Colonic mucosa (tissue), 4 donors: ENCODE measurements at regions of chr2 and their contacts with region 1.

Region 1: DNA sequence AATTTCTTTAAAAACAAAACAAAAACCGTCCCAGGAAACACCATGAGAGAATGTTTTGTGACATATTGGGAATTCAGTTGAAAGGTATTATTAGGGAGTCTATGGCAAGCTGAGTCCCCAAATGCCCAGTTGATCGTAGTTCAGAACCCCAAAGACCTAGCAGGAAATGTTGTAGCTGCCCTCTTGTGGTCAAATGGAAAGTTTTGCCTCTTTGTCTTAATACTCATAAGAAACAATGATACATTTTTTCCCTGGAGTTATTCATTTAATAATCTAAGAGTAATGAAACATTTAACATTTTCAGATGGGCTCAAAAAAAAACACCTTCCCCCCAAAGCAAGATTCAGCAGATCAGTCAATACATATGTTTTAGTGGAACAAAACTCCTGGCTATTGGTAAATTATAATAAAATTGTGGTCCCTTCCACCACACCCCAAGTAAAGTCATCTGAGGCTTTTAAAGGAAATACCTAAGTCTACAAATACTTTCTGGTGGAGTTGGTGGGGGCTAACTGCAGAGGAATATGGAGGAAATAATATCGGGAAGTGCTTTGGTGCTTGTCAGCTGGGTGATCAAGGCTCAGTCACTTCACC is 37.8 kb upstream of the EFEMP1 start:
- DNase-seq: no peak
- H3K4me3 ChIP-seq: no peak overlapping the region
- H3K27ac ChIP-seq: no peak overlapping the region
- H3K4me1 ChIP-seq: no peaks in the 10 kb centered on the region
- H3K27me3 ChIP-seq: no peaks in the 10 kb centered on the region
- CTCF ChIP-seq: peak; percentile 62

Region 2: GRCh38 chr2:55768991-55769390 is 192.4 kb before region 1 on chr2:
- intact Hi-C with region 1: loop called (anchors 5 kb)
- DNase-seq: no peak
- H3K4me3 ChIP-seq: no peak overlapping the region
- H3K27ac ChIP-seq: no peak overlapping the region
- H3K4me1 ChIP-seq: no peaks in the 10 kb centered on the region
- H3K27me3 ChIP-seq: no peaks in the 10 kb centered on the region
- CTCF ChIP-seq: no peak